ENCODE measurements at regions of chr3 and their contacts with region 1.

Region 1: GRCh38 chr3:195271116-195271858 is at the start of gene XXYLT1:
- DNase-seq: peak; percentile 93 to 97 (median 97)
- ATAC-seq: peak; percentile 97
- H3K4me3 ChIP-seq: peak within 1 kb of the TSS; percentile 82
- H3K27ac ChIP-seq: peak within 1 kb of the TSS; percentile 90
- H3K4me1 ChIP-seq: peaks cover 5% of the 10 kb centered on the region
- H3K27me3 ChIP-seq: no peaks in the 10 kb centered on the region
- total RNA-seq, gene XXYLT1: 4.3 to 6.2 (median 4.9) TPM

Region 2: GRCh38 chr3:195522254-195523023 is 251.2 kb after region 1 on chr3:
- intact Hi-C with region 1: loop called (anchors 2 to 5 kb)
- DNase-seq: no peak
- ATAC-seq: no peak
- H3K4me3 ChIP-seq: no peak overlapping the region
- H3K27ac ChIP-seq: no peak overlapping the region
- H3K4me1 ChIP-seq: no peaks in the 10 kb centered on the region
- H3K27me3 ChIP-seq: no peaks in the 10 kb centered on the region

Measured in right cardiac atrium (tissue), 5 donors.